ENCODE measurements at regions of chr1 and their contacts with region 1.

Region 1: GRCh38 chr1:90721210-90722194 is 4.4 kb upstream of the BARHL2 start:
- DNase-seq: peak; percentile 81
- CTCF ChIP-seq: peak; percentile 86

Region 2: GRCh38 chr1:90834886-90835660 is 113.6 kb after region 1 on chr1:
- in situ Hi-C with region 1: loop called (anchors 10 kb)
- DNase-seq: no peak
- CTCF ChIP-seq: no peak

Region 3: GRCh38 chr1:91007827-91008226 is 286.3 kb after region 1 on chr1:
- in situ Hi-C with region 1: no loop called
- DNase-seq: no peak
- CTCF ChIP-seq: no peak

Region 4: DNA sequence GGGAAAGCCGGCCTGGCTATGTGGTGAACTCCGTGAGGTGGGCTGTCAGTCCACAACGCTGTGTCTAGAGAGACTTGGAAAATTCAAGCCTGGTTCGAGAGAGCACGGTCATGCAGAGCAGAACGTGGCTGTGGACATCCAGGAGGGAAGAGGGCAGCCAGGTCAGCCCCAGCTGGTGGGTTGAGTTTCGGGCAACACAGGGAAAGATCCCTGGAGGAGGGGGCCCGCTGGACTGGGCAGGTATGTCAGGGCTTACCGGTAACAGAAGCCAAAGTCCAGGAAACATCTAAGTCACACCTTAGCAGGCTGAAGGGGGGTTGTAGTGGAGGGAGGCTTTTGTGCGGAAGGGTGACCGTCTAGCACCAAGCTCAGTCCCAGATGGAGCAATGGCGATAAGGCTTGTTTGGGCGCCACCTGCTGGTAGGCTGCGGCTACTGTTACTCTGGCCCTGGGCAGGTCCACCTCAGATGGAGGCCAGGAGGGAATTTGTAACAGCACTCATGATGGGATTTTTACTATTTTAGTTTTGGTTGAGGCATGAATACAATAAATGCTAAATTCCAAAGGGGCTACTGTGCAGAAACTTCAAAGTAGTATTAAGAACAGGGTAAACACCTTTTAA is 443.6 kb after region 1 on chr1:
- in situ Hi-C with region 1: loop called (anchors 25 kb)
- DNase-seq: peak; percentile 74
- CTCF ChIP-seq: peak; percentile 97